Sigmoid colon (tissue), 7 donors: ENCODE measurements at regions of chr11 and their contacts with region 1.

Region 1: GRCh38 chr11:2885676-2886081 is at the start of gene CDKN1C:
- DNase-seq: peak; percentile 97
- H3K4me3 ChIP-seq: peak within 1 kb of the TSS; percentile 72 to 98 (median 92)
- H3K27ac ChIP-seq: peak within 1 kb of the TSS; percentile 91 to 96 (median 94)
- H3K4me1 ChIP-seq: peaks cover 0 to 56% (median 44%) of the 10 kb centered on the region in 4 donors
- H3K27me3 ChIP-seq: no peaks in the 10 kb centered on the region
- CTCF ChIP-seq: no peak
- EP300 ChIP-seq: no peak
- POLR2A ChIP-seq: peak; percentile 87 to 91
- total RNA-seq, gene CDKN1C: 37.2 to 54.3 (median 47.4) TPM

Region 2: GRCh38 chr11:2305140-2305840 is 580.4 kb before region 1 on chr11:
- intact Hi-C with region 1: loop called (anchors 5 kb)
- DNase-seq: peak; percentile 95
- H3K4me3 ChIP-seq: peak overlapping the region in 1 of 4 donors; percentile 23
- H3K27ac ChIP-seq: peak overlapping the region; percentile 87 to 94 (median 92)
- H3K4me1 ChIP-seq: peaks cover 0 to 62% (median 52%) of the 10 kb centered on the region in 4 donors
- H3K27me3 ChIP-seq: no peaks in the 10 kb centered on the region
- CTCF ChIP-seq: peak; percentile 91 to 98 (median 94)
- EP300 ChIP-seq: no peak
- POLR2A ChIP-seq: no peak

Region 3: GRCh38 chr11:2655834-2656622 is 229.7 kb before region 1 on chr11:
- intact Hi-C with region 1: no loop called
- DNase-seq: no peak
- H3K4me3 ChIP-seq: no peak overlapping the region
- H3K27ac ChIP-seq: no peak overlapping the region
- H3K4me1 ChIP-seq: no peaks in the 10 kb centered on the region
- H3K27me3 ChIP-seq: no peaks in the 10 kb centered on the region
- CTCF ChIP-seq: no peak
- EP300 ChIP-seq: no peak
- POLR2A ChIP-seq: no peak

Region 4: GRCh38 chr11:2675540-2675939 is 210.1 kb before region 1 on chr11:
- intact Hi-C with region 1: loop called (anchors 1 kb)
- DNase-seq: peak; percentile 77
- H3K4me3 ChIP-seq: no peak overlapping the region
- H3K27ac ChIP-seq: peak overlapping the region; percentile 8 to 85 (median 72)
- H3K4me1 ChIP-seq: peaks cover 0 to 42% (median 35%) of the 10 kb centered on the region in 4 donors
- H3K27me3 ChIP-seq: no peaks in the 10 kb centered on the region
- CTCF ChIP-seq: no peak
- EP300 ChIP-seq: no peak
- POLR2A ChIP-seq: no peak

Region 5: GRCh38 chr11:2778630-2779498 is 106.8 kb before region 1 on chr11:
- intact Hi-C with region 1: loop called (anchors 2 kb)
- DNase-seq: peak; percentile 93
- H3K4me3 ChIP-seq: peak overlapping the region in 3 of 4 donors; percentile 9 to 24 (median 12)
- H3K27ac ChIP-seq: peak overlapping the region; percentile 79 to 90 (median 84)
- H3K4me1 ChIP-seq: peaks cover 0 to 32% (median 31%) of the 10 kb centered on the region in 4 donors
- H3K27me3 ChIP-seq: no peaks in the 10 kb centered on the region
- CTCF ChIP-seq: peak in 3 of 4 experiments; percentile 30 to 53 (median 45)
- EP300 ChIP-seq: peak in 1 of 4 donors; percentile 71
- POLR2A ChIP-seq: no peak

Region 6: DNA sequence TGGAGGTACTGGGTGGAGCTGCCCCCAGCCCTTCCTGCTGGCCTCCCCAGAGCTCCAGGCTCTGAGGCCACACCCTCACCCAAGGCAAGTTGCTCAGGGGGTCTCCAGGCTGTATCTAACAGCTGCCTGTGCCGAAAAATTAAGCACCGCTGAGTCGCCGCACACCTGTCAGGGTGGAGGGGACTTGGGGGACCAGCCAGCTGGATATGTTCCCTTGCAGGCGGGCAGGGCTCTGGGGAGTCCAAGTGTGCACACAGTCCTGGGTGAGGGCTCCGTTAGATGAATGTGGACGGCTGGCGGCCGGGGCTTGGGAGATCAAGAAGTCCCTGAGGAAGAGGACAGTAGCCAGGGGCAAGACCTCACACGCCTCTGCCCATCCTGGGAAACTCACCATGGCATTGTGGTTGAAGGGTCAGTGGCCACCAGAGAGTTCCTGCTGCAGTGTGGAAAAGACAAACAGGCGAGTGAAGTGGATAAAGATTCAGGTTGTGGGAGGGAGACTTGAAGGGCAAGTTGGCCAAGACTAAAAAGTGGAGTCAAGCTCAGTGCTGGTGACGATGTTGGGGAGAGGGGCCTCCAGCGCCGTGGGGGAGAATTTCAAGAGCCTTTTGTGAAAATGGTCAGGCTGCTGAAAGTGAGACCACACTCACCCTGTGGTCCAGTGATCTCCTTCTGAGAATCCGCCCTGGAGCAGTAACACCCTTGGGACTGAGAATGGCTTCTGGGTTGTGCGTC is 69.8 kb before region 1 on chr11:
- intact Hi-C with region 1: no loop called
- DNase-seq: no peak
- H3K4me3 ChIP-seq: no peak overlapping the region
- H3K27ac ChIP-seq: no peak overlapping the region
- H3K4me1 ChIP-seq: peaks cover 0 to 41% (median 36%) of the 10 kb centered on the region in 4 donors
- H3K27me3 ChIP-seq: no peaks in the 10 kb centered on the region
- CTCF ChIP-seq: no peak
- EP300 ChIP-seq: no peak
- POLR2A ChIP-seq: no peak

Region 7: DNA sequence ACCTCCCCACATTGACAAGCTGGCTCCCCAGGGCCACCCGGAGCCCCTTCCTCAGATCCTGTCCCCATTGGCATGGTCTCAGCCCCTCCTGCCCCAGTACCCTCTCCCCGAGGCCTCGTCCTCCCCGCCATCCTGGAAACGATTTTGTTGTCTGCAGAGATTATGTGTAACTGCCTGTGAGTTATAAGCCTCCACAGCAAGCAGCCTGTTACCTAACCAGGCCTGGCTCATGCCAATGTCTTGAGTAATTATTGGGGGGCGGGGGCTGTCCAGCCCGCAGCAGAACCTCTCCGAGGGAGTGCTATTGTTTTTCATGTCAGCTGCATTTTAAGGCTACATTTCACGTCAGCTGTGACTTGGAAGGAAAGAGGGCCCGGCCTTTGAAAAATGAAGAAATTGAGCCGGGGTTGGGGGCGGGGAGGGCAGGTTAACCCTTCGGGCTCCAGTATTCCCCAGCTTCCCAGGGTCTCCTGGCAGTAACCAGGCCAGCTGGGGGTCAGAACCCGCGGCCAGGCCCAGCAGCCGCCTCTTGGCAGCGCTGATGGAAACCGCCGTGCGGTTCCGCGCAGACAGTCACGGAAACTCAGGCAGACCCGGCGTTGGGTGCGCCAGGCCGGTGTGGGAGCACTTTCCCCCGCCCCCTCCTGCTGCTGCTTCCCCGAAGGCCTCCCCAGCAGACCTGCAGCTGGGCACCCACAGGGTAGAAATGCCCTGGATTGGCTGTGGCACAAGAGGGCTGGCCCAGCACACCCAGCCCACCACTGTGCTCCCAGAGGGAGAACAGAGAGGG is 59.6 kb before region 1 on chr11:
- intact Hi-C with region 1: loop called (anchors 2 kb)
- DNase-seq: peak; percentile 96
- H3K4me3 ChIP-seq: peak overlapping the region in 3 of 4 donors; percentile 4 to 30 (median 9)
- H3K27ac ChIP-seq: peak overlapping the region; percentile 88 to 97 (median 92)
- H3K4me1 ChIP-seq: peaks cover 0 to 42% (median 31%) of the 10 kb centered on the region in 4 donors
- H3K27me3 ChIP-seq: no peaks in the 10 kb centered on the region
- CTCF ChIP-seq: no peak
- EP300 ChIP-seq: peak in 1 of 4 donors; percentile 65
- POLR2A ChIP-seq: no peak